AG04450 (cell line): ENCODE measurements at regions of chr1 and their contacts with region 1.

Region 1: DNA sequence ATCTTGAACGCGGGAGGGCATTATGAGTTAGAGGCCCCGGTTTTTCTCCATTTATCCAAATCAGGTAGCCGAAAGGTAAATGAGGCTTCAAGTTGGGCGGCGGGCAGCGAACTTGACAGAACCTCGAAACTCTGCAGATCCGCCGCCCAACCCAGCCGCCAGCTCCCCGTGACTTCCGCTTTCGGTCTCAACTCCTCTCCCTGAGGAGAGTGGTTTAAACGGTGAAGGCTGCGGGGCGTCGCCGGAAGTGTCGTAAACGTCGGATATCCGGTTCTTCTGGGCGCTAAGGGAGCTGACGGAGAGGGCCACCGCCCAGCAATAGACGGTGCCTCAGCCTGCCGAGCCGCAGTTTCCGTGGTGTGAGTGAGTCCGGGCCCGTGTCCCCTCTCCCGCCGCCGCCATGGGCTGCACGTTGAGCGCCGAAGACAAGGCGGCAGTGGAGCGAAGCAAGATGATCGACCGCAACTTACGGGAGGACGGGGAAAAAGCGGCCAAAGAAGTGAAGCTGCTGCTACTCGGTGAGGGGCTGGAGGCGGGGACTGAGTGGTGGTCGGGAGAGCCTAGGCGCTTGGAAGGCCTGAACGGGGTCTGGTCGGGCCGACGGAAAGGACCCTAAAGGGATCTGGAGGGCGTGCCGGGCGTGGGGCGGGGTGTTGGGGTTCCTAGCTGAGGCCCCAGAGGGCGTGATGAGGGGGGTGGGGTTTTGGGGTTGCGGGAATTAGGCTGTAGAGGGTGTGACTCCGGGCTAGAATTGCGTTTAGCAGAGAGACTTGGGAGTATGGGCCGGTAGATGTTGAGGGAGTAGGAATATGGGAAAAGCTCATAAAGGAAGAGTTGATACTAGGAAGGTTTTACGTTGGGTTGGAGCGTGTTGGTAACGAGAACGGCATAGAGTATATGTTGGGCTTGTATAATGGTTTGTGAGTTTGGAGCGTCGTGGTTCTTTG is at the start of gene GNAI3:
- DNase-seq: peak; percentile 85
- H3K4me3 ChIP-seq: peak within 1 kb of the TSS; percentile 98
- H3K27ac ChIP-seq: peak within 1 kb of the TSS; percentile 83
- H3K27me3 ChIP-seq: no peaks in the 10 kb centered on the region
- CTCF ChIP-seq: no peak
- polyA plus RNA-seq, gene GNAI3: 10.2 and 14.8 TPM in 2 replicates

Region 2: GRCh38 chr1:109385417-109385816 is 163.2 kb before region 1 on chr1:
- CTCF ChIA-PET with region 1: no interaction called
- POLR2A ChIA-PET with region 1: no interaction called
- DNase-seq: no peak
- H3K4me3 ChIP-seq: no peak overlapping the region
- H3K27ac ChIP-seq: no peak overlapping the region
- H3K27me3 ChIP-seq: no peaks in the 10 kb centered on the region
- CTCF ChIP-seq: no peak

Region 3: DNA sequence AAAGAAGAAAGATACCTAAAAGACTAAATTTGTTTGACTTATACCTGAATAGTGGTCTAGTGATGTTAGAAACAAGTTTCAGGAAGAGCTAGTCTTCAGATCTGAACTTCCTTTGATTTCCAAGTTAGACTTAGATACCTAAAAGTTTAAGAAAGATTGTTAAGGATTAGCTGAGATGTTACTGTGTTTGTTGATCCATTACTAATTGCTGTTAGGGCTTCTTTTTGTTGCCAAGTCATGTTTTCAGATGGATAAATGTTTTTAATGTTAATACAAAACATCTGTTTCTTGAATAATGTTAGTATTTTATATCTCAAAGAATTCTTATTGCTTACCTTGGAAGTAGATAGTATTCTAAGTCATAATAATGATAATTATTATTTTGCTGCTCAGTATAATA is 11.4 kb after region 1 on chr1:
- CTCF ChIA-PET with region 1: interaction called, 13 read pairs
- POLR2A ChIA-PET with region 1: no interaction called
- DNase-seq: no peak
- H3K4me3 ChIP-seq: no peak overlapping the region
- H3K27ac ChIP-seq: no peak overlapping the region
- H3K27me3 ChIP-seq: no peaks in the 10 kb centered on the region
- CTCF ChIP-seq: no peak

Region 4: DNA sequence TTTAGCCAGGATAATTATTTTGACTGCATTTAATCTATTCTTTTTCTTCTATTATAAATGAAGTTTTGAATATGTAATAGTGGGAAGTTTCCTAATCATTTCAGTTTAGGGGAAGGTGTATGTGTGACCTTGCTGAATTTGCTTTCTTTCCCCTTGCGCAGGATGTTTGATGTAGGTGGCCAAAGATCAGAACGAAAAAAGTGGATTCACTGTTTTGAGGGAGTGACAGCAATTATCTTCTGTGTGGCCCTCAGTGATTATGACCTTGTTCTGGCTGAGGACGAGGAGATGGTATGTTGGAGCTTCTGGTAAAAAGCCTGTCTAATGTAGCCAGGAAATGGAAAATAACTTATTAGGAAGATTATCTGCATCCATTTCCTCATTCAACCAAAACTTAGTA is 37.5 kb after region 1 on chr1:
- CTCF ChIA-PET with region 1: no interaction called
- POLR2A ChIA-PET with region 1: no interaction called
- DNase-seq: no peak
- H3K4me3 ChIP-seq: no peak overlapping the region
- H3K27ac ChIP-seq: no peak overlapping the region
- H3K27me3 ChIP-seq: no peaks in the 10 kb centered on the region
- CTCF ChIP-seq: no peak

Region 5: DNA sequence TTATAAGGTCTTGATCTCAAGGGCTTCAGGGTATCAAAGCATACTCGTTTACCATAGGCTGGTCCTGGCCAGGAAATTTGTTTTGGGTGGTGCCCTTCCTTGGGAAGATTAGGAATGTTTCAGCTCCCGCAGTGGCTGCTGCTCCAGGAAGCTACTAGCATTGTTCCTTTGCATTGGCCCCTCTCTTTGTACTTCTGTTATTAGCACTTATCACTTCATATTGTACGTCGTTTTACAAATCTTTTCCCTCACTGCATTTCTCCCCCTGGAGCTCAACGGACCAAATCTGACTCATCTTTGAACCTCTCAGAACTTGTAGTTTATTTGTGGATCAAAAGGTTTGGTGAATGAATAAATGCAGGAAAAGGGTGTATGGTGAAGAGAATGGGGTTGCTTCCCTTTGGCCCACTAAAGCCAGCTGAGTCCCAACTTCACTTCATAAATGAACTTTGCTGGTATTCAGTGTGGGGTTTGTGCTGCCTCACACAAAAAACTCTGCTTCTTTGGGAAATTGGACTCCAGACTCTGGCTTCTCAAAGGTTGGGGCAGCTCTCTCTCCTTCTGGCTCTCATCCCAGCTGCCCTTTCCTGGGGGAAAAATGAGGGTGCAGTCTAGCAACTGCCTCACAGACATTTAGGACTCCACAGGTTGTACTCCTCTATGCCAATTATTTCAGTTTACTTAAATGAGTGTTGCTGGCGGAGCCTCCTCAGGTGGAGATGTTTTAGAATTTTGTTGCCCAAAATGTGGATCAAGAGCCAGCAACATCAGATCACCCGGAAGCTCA is 65.0 kb after region 1 on chr1:
- CTCF ChIA-PET with region 1: interaction called, 12 read pairs
- POLR2A ChIA-PET with region 1: interaction called, 19 read pairs
- DNase-seq: no peak
- H3K4me3 ChIP-seq: no peak overlapping the region
- H3K27ac ChIP-seq: peak overlapping the region; percentile 47
- H3K27me3 ChIP-seq: no peaks in the 10 kb centered on the region
- CTCF ChIP-seq: no peak

Region 6: DNA sequence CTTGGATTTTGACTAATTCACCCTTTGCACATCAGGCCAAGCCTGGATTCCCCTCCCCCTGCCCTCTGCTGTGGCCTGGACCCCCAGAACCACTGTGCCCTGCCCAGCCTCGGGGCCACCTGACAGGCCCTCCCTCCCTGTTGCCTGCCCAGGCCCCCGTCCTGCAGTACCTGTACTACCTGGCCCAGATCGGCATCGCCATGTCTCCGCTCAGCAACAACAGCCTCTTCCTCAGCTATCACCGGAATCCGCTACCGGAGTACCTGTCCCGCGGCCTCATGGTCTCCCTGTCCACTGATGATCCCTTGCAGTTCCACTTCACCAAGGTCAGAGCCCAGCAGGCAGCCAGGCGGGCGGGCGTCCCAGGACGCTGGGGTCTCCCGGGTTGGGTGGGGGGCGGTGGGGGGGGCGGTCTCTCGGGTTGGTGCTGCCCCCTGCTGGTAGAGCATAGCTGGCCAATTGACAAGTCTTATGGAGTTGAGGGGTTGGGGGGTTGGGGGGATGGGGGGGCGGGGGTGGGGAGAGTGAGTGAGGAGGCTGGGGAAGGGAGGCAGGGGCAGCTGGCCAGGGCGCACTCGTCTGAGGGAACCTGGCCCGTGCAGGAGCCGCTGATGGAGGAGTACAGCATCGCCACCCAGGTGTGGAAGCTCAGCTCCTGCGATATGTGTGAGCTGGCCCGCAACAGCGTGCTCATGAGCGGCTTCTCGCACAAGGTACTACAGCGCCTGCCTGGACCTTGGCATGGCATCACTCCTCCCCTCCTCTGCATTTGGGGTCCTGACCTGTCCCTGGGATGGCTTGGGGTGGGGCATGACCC is 81.7 kb after region 1 on chr1:
- CTCF ChIA-PET with region 1: interaction called, 106 read pairs
- POLR2A ChIA-PET with region 1: interaction called, 6 read pairs
- DNase-seq: no peak
- H3K4me3 ChIP-seq: no peak overlapping the region
- H3K27ac ChIP-seq: no peak overlapping the region
- H3K27me3 ChIP-seq: no peaks in the 10 kb centered on the region
- CTCF ChIP-seq: peak; percentile 8; the same call in 1 of the 2 replicates

Region 7: GRCh38 chr1:109649491-109649914 is 100.9 kb after region 1 on chr1:
- CTCF ChIA-PET with region 1: interaction called, 25 read pairs
- POLR2A ChIA-PET with region 1: interaction called, 4 read pairs
- DNase-seq: no peak
- H3K4me3 ChIP-seq: no peak overlapping the region
- H3K27ac ChIP-seq: no peak overlapping the region
- H3K27me3 ChIP-seq: no peaks in the 10 kb centered on the region
- CTCF ChIP-seq: 0 out of 2 replicates have a peak, but pooled peaks have one; percentile 16